CD4-positive, alpha-beta memory T cell (primary cell): ENCODE measurements at regions of chr10 and their contacts with region 1.

Region 1: GRCh38 chr10:95363303-95363912 is 72.6 kb upstream of the PDLIM1 start:
- DNase-seq: peak in 4 of 5 donors; percentile 46 to 53 (median 48)
- H3K4me3 ChIP-seq: no peak overlapping the region
- H3K4me3 Mint-ChIP-seq: no peak overlapping the region
- H3K27ac ChIP-seq: no peak overlapping the region
- H3K27ac Mint-ChIP-seq: no peak overlapping the region
- H3K4me1 ChIP-seq: no peaks in the 10 kb centered on the region
- H3K4me1 Mint-ChIP-seq: no peaks in the 10 kb centered on the region
- H3K27me3 ChIP-seq: no peaks in the 10 kb centered on the region
- H3K27me3 Mint-ChIP-seq: peaks cover 7 to 9% of the 10 kb centered on the region in 2 donors

Region 2: DNA sequence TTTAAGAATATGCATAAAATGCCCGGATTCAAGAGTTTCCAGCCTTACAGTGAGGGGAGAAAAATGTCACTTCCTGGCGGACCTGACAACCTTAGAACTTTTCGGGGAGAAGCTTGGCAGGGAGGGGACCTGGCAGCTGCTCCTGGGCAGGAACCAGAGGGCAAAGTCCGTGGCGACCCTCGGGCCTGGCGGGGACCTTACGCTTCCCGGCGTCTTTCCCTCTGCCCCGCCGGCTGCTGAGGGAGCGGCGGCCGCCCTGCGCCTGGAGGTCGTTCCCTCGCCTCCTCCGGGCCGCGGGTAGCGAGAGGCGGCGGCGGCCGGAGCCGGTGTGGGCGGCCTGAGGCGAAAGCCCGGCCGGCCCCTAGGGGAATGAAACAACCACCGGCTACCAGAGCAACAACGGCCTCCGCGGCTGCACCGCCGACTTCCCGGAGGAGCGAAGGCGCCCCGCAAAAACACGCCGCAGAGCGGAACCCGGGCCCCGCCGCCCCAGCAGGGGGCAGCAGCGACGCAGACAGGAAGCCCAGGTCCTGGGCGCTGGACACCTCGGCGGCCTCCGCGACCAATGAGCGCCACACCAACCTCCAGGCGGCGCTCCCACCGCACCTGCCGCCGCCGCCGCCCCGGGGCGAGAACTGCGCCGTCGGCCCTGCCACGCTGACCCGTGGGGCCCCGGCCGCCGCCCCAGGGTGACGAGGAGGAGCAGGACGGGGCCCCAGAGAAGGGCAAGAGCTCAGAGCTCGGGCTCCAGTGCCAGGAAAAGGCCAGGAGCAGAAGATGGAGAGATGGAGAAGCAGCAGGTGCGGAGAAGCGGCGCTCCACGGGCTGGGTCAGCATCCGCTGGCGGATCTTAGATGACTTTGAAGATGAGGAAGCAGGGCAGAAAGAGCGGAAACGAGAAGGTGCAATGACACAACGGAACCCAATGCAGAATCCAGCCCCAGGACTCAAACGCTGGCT is 179.9 kb before region 1 on chr10:
- CTCF ChIA-PET with region 1: interaction called, 3 read pairs
- POLR2A ChIA-PET with region 1: no interaction called
- intact Hi-C with region 1: loop called (anchors 1 kb)
- DNase-seq: peak in 4 of 5 donors; percentile 38 to 55 (median 43)
- H3K4me3 ChIP-seq: peak overlapping the region in 1 of 2 donors; percentile 45
- H3K4me3 Mint-ChIP-seq: peak overlapping the region; percentile 59 to 83 (median 76)
- H3K27ac ChIP-seq: no peak overlapping the region
- H3K27ac Mint-ChIP-seq: peak overlapping the region in 2 of 7 donors; percentile 61 to 86
- H3K4me1 ChIP-seq: no peaks in the 10 kb centered on the region
- H3K4me1 Mint-ChIP-seq: peaks cover 0 to 8% (median 7%) of the 10 kb centered on the region in 4 donors
- H3K27me3 ChIP-seq: peaks cover 5% of the 10 kb centered on the region
- H3K27me3 Mint-ChIP-seq: peaks cover 15 to 20% of the 10 kb centered on the region in 2 donors

Region 3: DNA sequence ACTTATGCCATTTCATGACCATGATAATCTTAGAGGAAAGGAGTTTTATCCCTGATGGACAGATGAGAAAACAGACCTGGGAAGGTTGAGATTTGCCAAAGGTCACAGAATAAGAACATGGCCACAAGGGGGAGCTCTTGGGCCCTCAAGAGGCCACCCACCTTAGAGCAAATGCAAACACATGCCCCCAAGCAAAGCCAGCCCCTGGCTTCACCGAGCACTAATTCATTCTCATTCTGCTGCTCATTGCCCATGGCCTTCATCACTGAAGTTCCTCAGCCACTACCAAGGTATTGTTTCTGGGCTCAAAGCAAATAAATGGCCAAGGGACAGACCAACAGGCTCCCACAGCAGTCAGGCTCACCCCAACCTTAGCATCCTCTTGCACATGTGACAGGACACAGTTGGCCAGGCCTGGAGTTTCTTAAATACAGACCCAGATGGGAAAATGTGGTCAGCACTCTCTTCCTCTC is 116.8 kb before region 1 on chr10:
- CTCF ChIA-PET with region 1: interaction called, 73 read pairs
- POLR2A ChIA-PET with region 1: no interaction called
- intact Hi-C with region 1: no loop called
- DNase-seq: peak in 4 of 5 donors; percentile 20 to 39 (median 31)
- H3K4me3 ChIP-seq: no peak overlapping the region
- H3K4me3 Mint-ChIP-seq: no peak overlapping the region
- H3K27ac ChIP-seq: no peak overlapping the region
- H3K27ac Mint-ChIP-seq: no peak overlapping the region
- H3K4me1 ChIP-seq: no peaks in the 10 kb centered on the region
- H3K4me1 Mint-ChIP-seq: no peaks in the 10 kb centered on the region
- H3K27me3 ChIP-seq: peaks cover 5% of the 10 kb centered on the region
- H3K27me3 Mint-ChIP-seq: peaks cover 5 to 19% of the 10 kb centered on the region in 2 donors

Region 4: GRCh38 chr10:95350219-95350829 is 13.1 kb before region 1 on chr10:
- CTCF ChIA-PET with region 1: interaction called, 18 read pairs
- POLR2A ChIA-PET with region 1: no interaction called
- intact Hi-C with region 1: no loop called
- DNase-seq: no peak
- H3K4me3 ChIP-seq: no peak overlapping the region
- H3K4me3 Mint-ChIP-seq: no peak overlapping the region
- H3K27ac ChIP-seq: no peak overlapping the region
- H3K27ac Mint-ChIP-seq: no peak overlapping the region
- H3K4me1 ChIP-seq: no peaks in the 10 kb centered on the region
- H3K4me1 Mint-ChIP-seq: no peaks in the 10 kb centered on the region
- H3K27me3 ChIP-seq: no peaks in the 10 kb centered on the region
- H3K27me3 Mint-ChIP-seq: peaks cover 0 to 4% of the 10 kb centered on the region in 2 donors

Region 5: GRCh38 chr10:95374597-95375209 is 11.3 kb after region 1 on chr10:
- CTCF ChIA-PET with region 1: interaction called, 109 read pairs
- POLR2A ChIA-PET with region 1: interaction called, 3 read pairs
- intact Hi-C with region 1: no loop called
- DNase-seq: peak in 4 of 5 donors; percentile 5 to 26 (median 14)
- H3K4me3 ChIP-seq: no peak overlapping the region
- H3K4me3 Mint-ChIP-seq: no peak overlapping the region
- H3K27ac ChIP-seq: no peak overlapping the region
- H3K27ac Mint-ChIP-seq: no peak overlapping the region
- H3K4me1 ChIP-seq: peaks cover 6% of the 10 kb centered on the region
- H3K4me1 Mint-ChIP-seq: peaks cover 2 to 7% (median 6%) of the 10 kb centered on the region in 4 donors
- H3K27me3 ChIP-seq: no peaks in the 10 kb centered on the region
- H3K27me3 Mint-ChIP-seq: peaks cover 7 to 15% of the 10 kb centered on the region in 2 donors

Region 6: DNA sequence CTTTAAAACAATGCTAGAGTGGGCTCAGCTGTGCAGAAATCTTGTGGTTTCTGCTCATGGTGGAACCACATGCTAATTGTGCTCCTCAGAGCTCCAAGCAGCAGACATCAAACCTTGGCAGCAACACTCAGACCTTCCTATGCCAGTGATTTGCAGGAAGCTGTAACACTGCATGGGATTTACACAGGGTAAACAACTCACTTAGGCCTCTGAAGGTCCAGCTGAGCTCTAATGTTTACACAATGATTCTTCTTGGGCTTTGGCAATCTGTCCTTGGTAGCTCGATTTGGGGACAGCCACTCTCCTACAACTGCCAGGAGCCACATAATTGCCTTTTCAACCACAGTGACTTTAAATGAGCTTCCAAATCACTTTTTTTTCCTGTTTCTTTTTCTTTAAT is 25.1 kb after region 1 on chr10:
- CTCF ChIA-PET with region 1: interaction called, 31 read pairs
- POLR2A ChIA-PET with region 1: no interaction called
- intact Hi-C with region 1: no loop called
- DNase-seq: no peak
- H3K4me3 ChIP-seq: no peak overlapping the region
- H3K4me3 Mint-ChIP-seq: no peak overlapping the region
- H3K27ac ChIP-seq: no peak overlapping the region
- H3K27ac Mint-ChIP-seq: no peak overlapping the region
- H3K4me1 ChIP-seq: no peaks in the 10 kb centered on the region
- H3K4me1 Mint-ChIP-seq: no peaks in the 10 kb centered on the region
- H3K27me3 ChIP-seq: no peaks in the 10 kb centered on the region
- H3K27me3 Mint-ChIP-seq: peaks cover 0 to 3% of the 10 kb centered on the region in 2 donors